Lower leg skin (tissue), 4 donors: ENCODE measurements at regions of chr16 and their contacts with region 1.

Region 1: DNA sequence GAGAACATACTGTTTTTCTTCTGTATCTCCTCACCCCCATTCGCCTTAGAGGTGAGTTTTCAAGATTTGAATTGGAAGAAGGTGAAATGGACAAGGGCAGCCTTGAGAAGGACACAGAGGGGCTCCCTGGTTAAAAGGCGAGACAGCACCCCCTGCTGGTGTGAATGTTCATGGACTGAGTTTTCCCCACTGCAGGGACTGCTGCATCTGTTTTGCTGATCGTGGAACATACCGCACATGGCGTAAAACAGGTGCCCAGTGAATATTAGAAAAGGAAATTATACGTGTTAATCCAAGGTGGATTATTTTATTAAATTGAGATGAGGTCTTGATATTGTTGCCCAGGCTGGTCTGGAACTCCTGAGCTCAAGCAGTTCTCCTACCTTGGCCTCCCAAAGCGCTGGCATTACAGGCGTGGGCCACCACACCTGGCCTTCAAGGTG is 54.5 kb downstream of the NDE1 start:
- DNase-seq: peak; percentile 76 to 94
- H3K4me3 ChIP-seq: no peak overlapping the region
- CTCF ChIP-seq: no peak
- POLR2A ChIP-seq: no peak

Region 2: GRCh38 chr16:15620796-15621195 is 83.8 kb before region 1 on chr16:
- intact Hi-C with region 1: loop called (anchors 5 kb)
- DNase-seq: no peak
- H3K4me3 ChIP-seq: no peak overlapping the region
- CTCF ChIP-seq: no peak
- POLR2A ChIP-seq: no peak